ENCODE measurements at regions of chr11 and their contacts with region 1.

Region 1: DNA sequence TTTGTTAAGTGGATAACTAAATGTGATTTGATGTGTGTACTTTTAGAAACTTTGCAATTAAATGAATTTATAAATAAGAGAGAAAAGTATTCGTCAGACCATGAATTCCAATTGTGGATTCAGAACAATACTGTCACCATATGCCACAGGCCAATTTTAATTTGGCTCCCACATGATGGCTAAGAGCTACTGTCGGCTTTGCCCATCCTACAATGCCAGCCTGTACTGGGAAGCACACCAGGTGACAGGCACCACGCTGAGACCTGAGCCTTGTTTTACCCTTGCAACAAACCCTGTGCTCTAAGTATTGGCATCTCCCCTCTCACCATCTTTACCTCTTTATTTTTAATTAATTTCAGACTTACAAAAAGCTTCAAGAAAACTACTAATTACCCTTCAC is 14.0 kb downstream of the RAB30 start:
- DNase-seq: no peak
- ATAC-seq: no peak
- H3K4me3 Mint-ChIP-seq: no peak overlapping the region
- H3K27ac Mint-ChIP-seq: peak overlapping the region; percentile 46
- H3K4me1 Mint-ChIP-seq: peaks cover 96% of the 10 kb centered on the region
- H3K27me3 Mint-ChIP-seq: no peaks in the 10 kb centered on the region
- CTCF ChIP-seq: no peak

Region 2: DNA sequence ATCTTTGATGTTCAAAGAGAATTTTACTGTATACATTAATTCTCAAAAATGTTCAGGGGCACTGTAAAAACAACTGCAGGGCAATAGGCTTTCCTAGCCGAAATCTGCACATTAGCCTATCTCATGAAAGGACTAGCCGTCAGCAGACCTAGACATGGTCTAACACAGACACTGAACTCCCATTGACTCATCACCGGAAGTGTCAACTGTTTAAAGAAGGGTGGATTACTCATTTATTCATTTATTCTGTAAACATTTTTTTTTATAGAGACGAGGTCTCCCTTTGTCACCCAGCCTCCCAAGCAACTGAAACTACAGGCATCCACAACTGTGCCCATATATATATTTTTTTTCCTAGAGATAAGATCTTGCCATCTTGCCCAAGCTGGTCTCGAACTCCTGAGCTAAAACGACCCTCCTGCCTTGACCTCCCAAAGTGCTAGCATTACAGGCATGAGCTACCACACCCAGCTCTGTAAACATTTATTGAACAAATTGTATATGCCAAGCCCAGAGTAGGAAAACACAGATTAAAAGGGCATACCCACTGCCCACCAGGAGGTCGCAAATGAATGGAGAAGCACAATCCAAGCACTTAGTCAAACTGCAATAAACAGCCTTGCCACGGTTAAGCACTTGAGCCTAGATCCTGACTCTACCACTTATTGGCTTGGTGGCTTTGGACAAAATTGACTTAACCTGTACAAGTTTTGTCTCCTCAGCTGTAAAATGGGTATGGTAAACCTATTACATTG is 12.6 kb before region 1 on chr11:
- CTCF ChIA-PET with region 1: interaction called, 3 read pairs
- POLR2A ChIA-PET with region 1: interaction called, 42 read pairs
- intact Hi-C with region 1: loop called (anchors 1 kb)
- DNase-seq: no peak
- ATAC-seq: peak; percentile 64
- H3K4me3 Mint-ChIP-seq: peak overlapping the region; percentile 13
- H3K27ac Mint-ChIP-seq: peak overlapping the region; percentile 64
- H3K4me1 Mint-ChIP-seq: peaks cover 86% of the 10 kb centered on the region
- H3K27me3 Mint-ChIP-seq: no peaks in the 10 kb centered on the region
- CTCF ChIP-seq: no peak

Region 3: DNA sequence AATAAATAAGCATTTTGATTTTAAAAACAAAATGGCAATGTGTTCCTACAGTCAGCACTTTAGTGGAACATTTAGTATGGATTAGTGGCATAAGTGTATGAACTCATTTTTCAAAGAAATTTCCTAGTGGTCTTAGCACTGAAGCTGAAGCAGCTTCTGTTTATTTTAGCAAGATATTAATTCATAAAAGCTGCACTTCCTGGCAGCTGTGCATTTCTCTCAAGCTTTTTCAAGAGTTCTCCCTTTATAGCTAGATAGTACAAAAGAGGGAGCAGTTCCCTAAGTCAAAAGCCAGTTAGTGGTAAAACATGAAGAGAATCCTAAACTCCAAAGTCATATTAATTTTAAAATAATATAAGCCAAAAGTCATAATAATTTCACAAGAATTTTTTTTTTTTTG is 1264.5 kb after region 1 on chr11:
- CTCF ChIA-PET with region 1: no interaction called
- POLR2A ChIA-PET with region 1: no interaction called
- intact Hi-C with region 1: no loop called
- DNase-seq: no peak
- ATAC-seq: no peak
- H3K4me3 Mint-ChIP-seq: no peak overlapping the region
- H3K27ac Mint-ChIP-seq: no peak overlapping the region
- H3K4me1 Mint-ChIP-seq: no peaks in the 10 kb centered on the region
- H3K27me3 Mint-ChIP-seq: no peaks in the 10 kb centered on the region
- CTCF ChIP-seq: no peak

Measured in activated B cell treated with CpG ODN at 0.5 μM for 24 hours (primary cell).